ENCODE measurements at regions of chr14 and their contacts with region 1.

Region 1: DNA sequence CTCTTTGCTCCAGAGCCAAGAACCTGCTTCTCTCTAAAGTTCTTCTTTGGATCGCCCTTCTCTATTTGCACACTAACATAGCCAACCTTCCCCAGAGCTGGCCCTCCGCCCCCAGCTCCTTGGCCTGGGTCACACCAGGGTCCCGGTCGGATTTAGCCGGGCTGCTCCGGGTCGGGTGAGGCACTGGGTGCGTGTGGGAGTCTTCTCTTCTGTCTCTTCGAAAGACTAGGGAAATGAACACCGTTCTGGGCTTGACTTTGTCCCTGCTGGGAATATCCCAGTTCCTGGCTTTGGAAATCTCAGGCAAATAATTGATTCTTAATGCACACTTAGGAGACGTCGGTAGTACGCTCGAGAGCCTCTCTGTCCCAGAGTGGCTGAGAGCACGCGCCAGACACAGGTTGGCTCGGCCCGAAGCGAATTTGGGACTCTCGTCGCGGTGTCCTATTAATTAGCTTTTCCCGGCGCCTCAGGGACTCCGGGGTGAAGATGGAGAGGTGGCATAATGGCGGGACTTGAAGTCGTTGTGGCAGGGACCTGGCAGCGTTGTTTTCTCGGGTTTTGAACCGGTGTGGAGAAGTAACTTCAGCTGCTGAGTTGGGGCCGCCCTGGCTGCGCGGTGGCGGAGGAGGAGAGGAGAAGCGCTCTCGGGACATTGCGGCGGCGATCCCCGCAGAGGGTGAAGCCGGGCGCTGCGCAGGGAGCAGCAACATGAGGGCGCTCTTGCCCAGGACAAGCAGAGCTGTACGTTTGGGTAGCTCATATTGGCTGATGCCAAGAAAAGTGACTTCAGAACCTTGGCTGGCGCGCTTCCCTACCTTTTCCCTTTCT is 7.5 kb downstream of the FOXG1 start:
- DNase-seq: no peak
- H3K4me3 Mint-ChIP-seq: no peak overlapping the region
- H3K27ac Mint-ChIP-seq: no peak overlapping the region
- H3K4me1 Mint-ChIP-seq: no peaks in the 10 kb centered on the region
- H3K27me3 Mint-ChIP-seq: peaks cover 40% of the 10 kb centered on the region

Region 2: DNA sequence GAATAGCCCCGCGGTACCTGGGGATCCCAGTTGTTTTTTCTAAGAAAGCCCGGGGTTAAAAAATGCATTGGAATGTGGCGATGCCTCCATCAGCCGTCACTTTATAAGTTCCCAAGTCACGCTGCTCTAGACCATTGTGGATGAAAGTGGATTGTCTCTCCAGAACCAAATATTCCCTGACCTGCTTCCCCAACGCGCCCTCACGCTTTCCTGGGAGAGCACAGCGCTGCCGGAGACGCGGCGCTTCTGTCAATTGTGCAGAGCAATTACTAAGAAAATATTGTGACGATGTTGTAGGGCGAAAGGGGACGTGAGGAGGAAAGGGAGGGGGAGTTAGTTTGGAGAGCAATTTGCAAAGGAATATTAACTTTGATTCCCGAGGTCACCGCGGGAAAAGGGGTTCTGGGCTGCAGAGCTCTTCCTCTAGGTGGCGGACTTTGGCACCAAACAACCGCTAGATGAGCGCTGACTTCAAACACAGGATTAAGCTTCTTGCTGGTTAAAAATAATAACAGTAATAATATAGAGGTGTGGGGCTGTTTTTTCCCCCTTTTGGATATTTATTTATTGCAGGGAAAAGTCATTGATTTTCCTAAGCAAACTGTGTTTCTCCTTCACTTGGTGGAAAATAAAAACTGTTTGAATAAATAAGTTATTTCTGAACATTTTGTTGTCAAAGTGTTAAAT is 17.0 kb before region 1 on chr14:
- intact Hi-C with region 1: loop called (anchors 2 kb)
- DNase-seq: no peak
- H3K4me3 Mint-ChIP-seq: no peak overlapping the region
- H3K27ac Mint-ChIP-seq: no peak overlapping the region
- H3K4me1 Mint-ChIP-seq: no peaks in the 10 kb centered on the region
- H3K27me3 Mint-ChIP-seq: peaks cover 58% of the 10 kb centered on the region